IMR-90 (cell line): ENCODE measurements at regions of chr18 and their contacts with region 1.

Region 1: GRCh38 chr18:57630002-57630753 is 8.5 kb upstream of the NARS1 start:
- DNase-seq: peak; percentile 93
- ATAC-seq: peak; percentile 98
- H3K4me3 ChIP-seq: peak overlapping the region; percentile 62
- H3K27ac ChIP-seq: peak overlapping the region; percentile 90
- H3K4me1 ChIP-seq: peaks cover 3% of the 10 kb centered on the region
- H3K27me3 ChIP-seq: no peaks in the 10 kb centered on the region
- CTCF ChIP-seq: peak; percentile 82
- POLR2A ChIP-seq: peak; percentile 79
- RAD21 ChIP-seq: peak; percentile 75

Region 2: GRCh38 chr18:57803103-57803969 is 173.2 kb after region 1 on chr18 and contains the start of gene ATP8B1:
- CTCF ChIA-PET with region 1: no interaction called
- POLR2A ChIA-PET with region 1: no interaction called
- dilution Hi-C with region 1: no loop called
- in situ Hi-C with region 1: no loop called
- intact Hi-C with region 1: loop called (anchors 2 kb)
- DNase-seq: peak; percentile 73
- ATAC-seq: peak; percentile 89
- H3K4me3 ChIP-seq: peak within 1 kb of the TSS; percentile 95
- H3K27ac ChIP-seq: peak within 1 kb of the TSS; percentile 77
- H3K4me1 ChIP-seq: peaks cover 8% of the 10 kb centered on the region
- H3K27me3 ChIP-seq: no peaks in the 10 kb centered on the region
- CTCF ChIP-seq: no peak
- POLR2A ChIP-seq: peak; percentile 47; the same call in 1 of the 2 replicates
- RAD21 ChIP-seq: no peak
- total RNA-seq, gene ATP8B1: 136 and 170 TPM in 2 replicates

Region 3: DNA sequence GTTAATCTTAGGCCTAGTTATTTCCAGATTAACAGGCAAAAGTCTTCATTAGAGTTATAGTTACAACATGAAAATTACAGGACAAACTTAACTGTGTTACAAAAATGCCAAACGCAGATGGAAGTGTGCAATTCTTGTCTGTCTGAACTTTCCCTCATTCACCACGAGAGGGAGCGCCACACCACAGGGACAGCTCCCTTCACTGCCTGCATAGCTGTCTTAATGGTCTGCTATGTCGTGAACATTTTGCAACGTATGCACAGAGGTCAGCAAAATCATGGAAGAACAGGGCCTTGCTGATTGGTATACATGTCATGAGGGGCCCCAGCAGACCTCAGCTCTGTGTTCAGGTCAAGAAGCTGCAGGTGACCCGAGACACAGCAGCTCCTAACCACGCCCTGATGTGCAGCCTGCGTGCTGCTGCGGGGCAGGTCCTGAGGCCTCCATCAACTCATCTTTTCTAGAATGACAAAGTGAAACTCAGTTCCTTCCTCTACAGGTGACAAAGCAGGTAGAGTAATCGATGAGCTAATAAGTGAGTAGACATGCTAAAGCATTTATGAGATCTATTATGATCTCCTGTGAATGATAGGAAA is 251.7 kb after region 1 on chr18:
- CTCF ChIA-PET with region 1: no interaction called
- POLR2A ChIA-PET with region 1: no interaction called
- dilution Hi-C with region 1: no loop called
- in situ Hi-C with region 1: no loop called
- intact Hi-C with region 1: loop called (anchors 10 kb)
- DNase-seq: peak; percentile 86
- ATAC-seq: peak; percentile 100
- H3K4me3 ChIP-seq: no peak overlapping the region
- H3K27ac ChIP-seq: no peak overlapping the region
- H3K4me1 ChIP-seq: no peaks in the 10 kb centered on the region
- H3K27me3 ChIP-seq: 0 out of 2 replicates have a peak, but pooled peaks cover 2% of the 10 kb centered on the region
- CTCF ChIP-seq: peak; percentile 97
- POLR2A ChIP-seq: 0 out of 2 replicates have a peak, but pooled peaks have one; percentile 25
- RAD21 ChIP-seq: peak; percentile 99

Region 4: GRCh38 chr18:58124475-58124874 is 494.3 kb after region 1 on chr18:
- CTCF ChIA-PET with region 1: no interaction called
- POLR2A ChIA-PET with region 1: no interaction called
- dilution Hi-C with region 1: no loop called
- in situ Hi-C with region 1: loop called (anchors 25 kb)
- intact Hi-C with region 1: loop called (anchors 5 kb)
- DNase-seq: no peak
- ATAC-seq: no peak
- H3K4me3 ChIP-seq: no peak overlapping the region
- H3K27ac ChIP-seq: no peak overlapping the region
- H3K4me1 ChIP-seq: peaks cover 7% of the 10 kb centered on the region; the same call in 1 of the 2 replicates
- H3K27me3 ChIP-seq: no peaks in the 10 kb centered on the region
- CTCF ChIP-seq: no peak
- POLR2A ChIP-seq: no peak
- RAD21 ChIP-seq: no peak